Heart right ventricle (tissue), 16 donors: ENCODE measurements at regions of chr18 and their contacts with region 1.

Region 1: GRCh38 chr18:66141716-66142115 is 390.9 kb downstream of the CDH7 start:
- DNase-seq: no peak
- ATAC-seq: no peak
- H3K4me3 ChIP-seq: no peak overlapping the region
- H3K27ac ChIP-seq: no peak overlapping the region
- H3K4me1 ChIP-seq: peaks cover 0 to 12% (median 0%) of the 10 kb centered on the region in 9 donors
- H3K27me3 ChIP-seq: no peaks in the 10 kb centered on the region
- CTCF ChIP-seq: no peak

Region 2: DNA sequence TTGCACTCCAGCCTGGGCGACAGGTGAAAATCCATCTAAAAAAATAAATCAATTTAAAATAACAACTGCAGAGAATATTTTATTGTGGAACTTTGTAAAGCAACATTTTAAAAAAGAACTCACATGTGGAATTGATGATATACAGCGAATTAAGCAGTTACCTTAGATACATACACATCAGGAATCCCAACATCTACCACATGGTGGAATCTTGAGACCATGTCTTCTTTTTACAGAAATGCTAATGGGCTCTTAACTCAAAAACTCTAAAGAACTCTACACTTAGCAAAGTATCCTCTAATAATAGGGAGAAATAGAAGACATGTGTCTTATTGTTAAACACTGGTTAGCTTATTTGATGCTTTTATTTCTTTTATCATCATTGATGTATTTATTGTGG is 17.3 kb before region 1 on chr18:
- intact Hi-C with region 1: loop called in 1 of 10 experiments (anchors 1 kb)
- DNase-seq: no peak
- ATAC-seq: no peak
- H3K4me3 ChIP-seq: no peak overlapping the region
- H3K27ac ChIP-seq: no peak overlapping the region
- H3K4me1 ChIP-seq: no peaks in the 10 kb centered on the region
- H3K27me3 ChIP-seq: no peaks in the 10 kb centered on the region
- CTCF ChIP-seq: peak in 7 of 9 donors; percentile 22 to 54 (median 49)